ENCODE measurements at regions of chr3 and their contacts with region 1.

Region 1: DNA sequence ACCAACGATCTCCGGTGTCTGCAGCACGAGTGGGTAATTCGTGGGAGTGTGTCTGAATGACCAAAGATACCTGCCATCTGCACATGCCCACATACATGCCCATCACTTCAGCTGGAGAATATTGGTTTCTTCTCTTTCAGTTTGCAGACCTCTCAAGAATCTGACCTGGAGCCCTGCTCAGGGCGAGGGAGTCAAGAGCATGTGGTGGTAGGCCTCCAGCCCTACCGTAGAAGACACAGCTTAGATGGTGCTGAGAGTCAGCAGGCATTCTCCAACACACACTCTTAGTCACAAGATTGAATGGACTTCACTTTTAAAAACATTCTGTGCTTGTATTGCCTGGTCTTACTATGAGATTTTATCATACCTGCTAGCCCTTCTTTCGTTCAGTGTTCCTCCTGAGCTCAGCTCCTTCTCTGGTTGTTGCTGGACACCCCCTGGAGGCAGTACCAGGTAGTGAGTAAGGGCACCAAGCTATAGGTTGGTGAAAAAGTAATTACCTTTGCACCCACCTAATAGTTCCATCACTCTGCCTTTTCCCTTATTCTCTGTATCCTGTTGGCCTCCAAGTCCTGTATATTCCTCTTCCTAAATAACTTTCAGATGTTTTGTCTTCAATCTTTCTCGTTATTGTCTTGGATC is 252.0 kb downstream of the CACNA2D3 start:
- DNase-seq: no peak
- H3K4me3 Mint-ChIP-seq: no peak overlapping the region
- H3K27ac Mint-ChIP-seq: no peak overlapping the region
- H3K4me1 Mint-ChIP-seq: no peaks in the 10 kb centered on the region
- H3K27me3 Mint-ChIP-seq: no peaks in the 10 kb centered on the region

Region 2: DNA sequence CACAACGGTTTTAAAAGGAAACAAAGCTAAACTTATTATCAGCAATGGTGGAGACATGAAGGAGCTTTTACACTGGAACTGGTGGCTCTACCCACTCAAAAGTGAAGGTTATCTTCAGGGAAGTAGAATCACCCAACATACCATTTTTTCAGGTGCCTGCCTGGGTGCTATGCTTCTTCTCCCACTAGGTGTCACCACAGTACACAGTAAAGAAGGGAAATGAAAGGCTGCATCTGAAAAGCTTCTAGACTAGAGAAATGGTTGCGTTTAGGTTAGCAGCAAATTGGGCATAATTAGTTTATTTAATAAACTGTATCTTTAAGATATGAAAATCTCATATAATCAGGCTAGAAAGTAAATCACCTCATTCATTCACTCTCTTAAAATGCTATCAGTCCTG is 435.7 kb before region 1 on chr3:
- CTCF ChIA-PET with region 1: interaction called, 14 read pairs
- POLR2A ChIA-PET with region 1: no interaction called
- DNase-seq: peak; percentile 31
- H3K4me3 Mint-ChIP-seq: no peak overlapping the region
- H3K27ac Mint-ChIP-seq: no peak overlapping the region
- H3K4me1 Mint-ChIP-seq: no peaks in the 10 kb centered on the region
- H3K27me3 Mint-ChIP-seq: peaks cover 9% of the 10 kb centered on the region

Region 3: DNA sequence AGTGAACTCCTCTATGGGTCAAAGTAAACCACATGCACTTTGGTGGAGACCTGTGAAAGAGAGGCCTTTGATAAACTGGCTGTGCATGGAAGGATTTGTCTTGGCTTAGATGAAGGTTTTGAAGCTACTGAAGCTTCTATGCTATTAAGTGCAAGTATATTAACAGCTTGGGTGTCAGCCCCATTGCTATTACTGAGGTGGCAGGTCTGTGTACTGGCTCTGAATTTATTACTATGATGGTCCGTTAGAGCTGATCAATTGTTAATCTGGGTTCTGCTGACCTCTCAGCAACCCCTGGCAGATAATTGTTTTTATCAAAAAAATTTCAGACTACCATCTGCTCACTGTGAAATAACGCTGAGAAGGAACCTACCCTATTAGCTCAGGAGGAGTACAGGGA is 16.2 kb after region 1 on chr3:
- CTCF ChIA-PET with region 1: no interaction called
- POLR2A ChIA-PET with region 1: no interaction called
- DNase-seq: no peak
- H3K4me3 Mint-ChIP-seq: no peak overlapping the region
- H3K27ac Mint-ChIP-seq: no peak overlapping the region
- H3K4me1 Mint-ChIP-seq: no peaks in the 10 kb centered on the region
- H3K27me3 Mint-ChIP-seq: no peaks in the 10 kb centered on the region

Region 4: GRCh38 chr3:54433846-54434245 is 59.5 kb after region 1 on chr3:
- CTCF ChIA-PET with region 1: no interaction called
- POLR2A ChIA-PET with region 1: no interaction called
- DNase-seq: no peak
- H3K4me3 Mint-ChIP-seq: no peak overlapping the region
- H3K27ac Mint-ChIP-seq: no peak overlapping the region
- H3K4me1 Mint-ChIP-seq: no peaks in the 10 kb centered on the region
- H3K27me3 Mint-ChIP-seq: no peaks in the 10 kb centered on the region

Region 5: GRCh38 chr3:54494209-54494608 is 119.9 kb after region 1 on chr3:
- CTCF ChIA-PET with region 1: no interaction called
- POLR2A ChIA-PET with region 1: no interaction called
- DNase-seq: no peak
- H3K4me3 Mint-ChIP-seq: no peak overlapping the region
- H3K27ac Mint-ChIP-seq: no peak overlapping the region
- H3K4me1 Mint-ChIP-seq: no peaks in the 10 kb centered on the region
- H3K27me3 Mint-ChIP-seq: no peaks in the 10 kb centered on the region

Measured in activated CD4-positive, alpha-beta memory T cell treated with anti-CD3 and anti-CD28 coated beads, Interleukin-2, amount 10 ng/mL, durations not matched to agents 7 days and 5 days (primary cell).